ENCODE measurements at regions of chr12 and their contacts with region 1.

Region 1: GRCh38 chr12:76020731-76021672 is 10.6 kb downstream of the PHLDA1 start:
- DNase-seq: peak; percentile 99
- ATAC-seq: peak; percentile 70
- H3K4me3 ChIP-seq: peak overlapping the region; percentile 16; the same call in 1 of the 2 replicates
- H3K27ac ChIP-seq: peak overlapping the region; percentile 90
- H3K4me1 ChIP-seq: peaks cover 17% of the 10 kb centered on the region
- H3K27me3 ChIP-seq: no peaks in the 10 kb centered on the region
- CTCF ChIP-seq: no peak
- POLR2A ChIP-seq: peak; percentile 72; the same call in 1 of the 2 replicates
- RAD21 ChIP-seq: peak; percentile 19

Region 2: GRCh38 chr12:75690296-75690955 is 330.6 kb before region 1 on chr12:
- CTCF ChIA-PET with region 1: no interaction called
- POLR2A ChIA-PET with region 1: no interaction called
- dilution Hi-C with region 1: no loop called
- in situ Hi-C with region 1: loop called (anchors 10 kb)
- intact Hi-C with region 1: no loop called
- DNase-seq: peak; percentile 100
- ATAC-seq: peak; percentile 91
- H3K4me3 ChIP-seq: no peak overlapping the region
- H3K27ac ChIP-seq: peak overlapping the region; percentile 67
- H3K4me1 ChIP-seq: peaks cover 3% of the 10 kb centered on the region
- H3K27me3 ChIP-seq: no peaks in the 10 kb centered on the region
- CTCF ChIP-seq: no peak
- POLR2A ChIP-seq: no peak
- RAD21 ChIP-seq: peak; percentile 44

Region 3: DNA sequence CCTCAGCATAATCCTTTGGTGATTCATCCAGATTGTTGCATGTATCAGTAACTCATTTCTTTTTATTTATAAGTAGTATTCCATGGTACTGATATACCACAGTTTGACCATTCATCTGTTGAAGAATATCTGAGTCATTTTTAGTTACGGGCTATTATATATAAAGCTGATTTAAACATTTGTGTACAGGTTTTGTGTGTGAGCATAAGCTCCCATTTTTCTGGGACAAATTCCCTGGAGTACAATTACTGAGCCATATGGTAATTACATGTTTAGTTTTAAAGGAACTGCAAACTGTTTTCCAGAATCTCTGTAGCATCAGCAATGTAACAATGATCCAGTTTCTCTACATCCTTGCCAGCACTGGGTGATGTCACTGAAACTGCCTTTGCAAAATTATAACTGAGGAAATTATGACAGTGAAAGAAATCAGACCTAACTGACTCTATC is 273.4 kb before region 1 on chr12:
- CTCF ChIA-PET with region 1: no interaction called
- POLR2A ChIA-PET with region 1: interaction called, 9 read pairs
- dilution Hi-C with region 1: no loop called
- in situ Hi-C with region 1: no loop called
- intact Hi-C with region 1: loop called (anchors 1 kb)
- DNase-seq: peak; percentile 92
- ATAC-seq: peak; percentile 70
- H3K4me3 ChIP-seq: no peak overlapping the region
- H3K27ac ChIP-seq: peak overlapping the region; percentile 88
- H3K4me1 ChIP-seq: peaks cover 14% of the 10 kb centered on the region
- H3K27me3 ChIP-seq: no peaks in the 10 kb centered on the region
- CTCF ChIP-seq: no peak
- POLR2A ChIP-seq: no peak
- RAD21 ChIP-seq: no peak

Region 4: DNA sequence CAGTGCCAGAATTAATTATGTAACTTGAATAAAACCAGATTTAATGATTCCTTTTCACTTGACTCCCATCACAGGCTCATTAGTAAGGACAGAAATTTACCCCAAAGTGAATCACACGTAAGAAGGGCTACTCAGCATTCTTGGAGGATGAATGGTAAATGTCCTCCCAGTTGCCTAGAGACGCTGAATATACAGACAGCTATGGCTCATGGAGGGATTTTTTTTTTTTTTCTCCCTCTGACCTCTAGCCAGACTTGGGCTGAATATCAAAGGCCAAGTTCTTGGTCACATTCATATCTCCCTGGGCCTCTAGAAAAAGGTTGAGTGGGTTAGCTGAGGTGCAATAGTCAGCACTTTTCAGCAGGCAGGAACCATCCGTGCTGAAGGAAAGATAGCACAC is 67.0 kb before region 1 on chr12:
- CTCF ChIA-PET with region 1: no interaction called
- POLR2A ChIA-PET with region 1: interaction called, 3 read pairs
- dilution Hi-C with region 1: no loop called
- in situ Hi-C with region 1: loop called (anchors 5 kb)
- intact Hi-C with region 1: loop called (anchors 2 kb)
- DNase-seq: peak; percentile 97
- ATAC-seq: peak; percentile 81
- H3K4me3 ChIP-seq: no peak overlapping the region
- H3K27ac ChIP-seq: peak overlapping the region; percentile 91
- H3K4me1 ChIP-seq: peaks cover 18% of the 10 kb centered on the region
- H3K27me3 ChIP-seq: no peaks in the 10 kb centered on the region
- CTCF ChIP-seq: no peak
- POLR2A ChIP-seq: no peak
- RAD21 ChIP-seq: peak; percentile 21; the same call in 1 of the 2 replicates

Region 5: DNA sequence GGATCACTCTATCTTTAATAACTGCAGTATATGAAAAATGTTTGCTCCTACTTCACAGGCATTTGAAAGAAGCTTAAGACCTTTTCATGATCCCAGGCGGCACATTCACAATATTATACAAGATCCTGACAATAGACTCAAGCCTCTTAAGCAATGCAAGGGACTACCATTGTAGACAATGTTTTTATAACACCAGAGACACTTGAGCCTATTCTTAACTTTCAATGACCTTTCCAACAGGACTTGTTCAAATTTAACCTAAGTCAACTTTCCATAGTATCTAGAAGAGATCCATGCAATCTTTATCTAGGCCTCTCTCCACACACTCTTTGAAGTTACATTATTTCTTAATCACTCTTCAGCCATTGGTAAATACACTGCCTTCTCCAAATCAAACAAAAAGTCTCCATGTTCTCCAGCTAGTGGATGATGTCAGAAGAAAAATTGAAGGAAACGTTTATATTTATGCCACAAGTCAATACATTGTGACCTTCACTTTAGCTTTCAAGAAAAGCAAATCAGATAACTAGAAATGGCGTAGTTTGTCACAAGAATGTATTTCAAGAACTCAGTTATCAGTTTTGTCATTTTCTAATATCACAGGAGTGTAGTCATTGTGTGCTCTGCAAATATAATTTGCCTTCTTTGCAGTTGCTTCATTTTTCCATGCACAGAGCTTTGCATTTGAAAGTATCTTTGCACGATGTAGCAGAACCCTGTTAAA is 30.7 kb before region 1 on chr12:
- CTCF ChIA-PET with region 1: no interaction called
- POLR2A ChIA-PET with region 1: no interaction called
- dilution Hi-C with region 1: no loop called
- in situ Hi-C with region 1: no loop called
- intact Hi-C with region 1: no loop called
- DNase-seq: peak; percentile 20
- ATAC-seq: no peak; the same call in 1 of the 2 replicates
- H3K4me3 ChIP-seq: no peak overlapping the region
- H3K27ac ChIP-seq: no peak overlapping the region; the same call in 1 of the 2 replicates
- H3K4me1 ChIP-seq: peaks cover 3% of the 10 kb centered on the region
- H3K27me3 ChIP-seq: no peaks in the 10 kb centered on the region
- CTCF ChIP-seq: no peak
- POLR2A ChIP-seq: no peak
- RAD21 ChIP-seq: no peak

Measured in IMR-90 (cell line).